ENCODE measurements at regions of chr7 and their contacts with region 1.

Region 1: DNA sequence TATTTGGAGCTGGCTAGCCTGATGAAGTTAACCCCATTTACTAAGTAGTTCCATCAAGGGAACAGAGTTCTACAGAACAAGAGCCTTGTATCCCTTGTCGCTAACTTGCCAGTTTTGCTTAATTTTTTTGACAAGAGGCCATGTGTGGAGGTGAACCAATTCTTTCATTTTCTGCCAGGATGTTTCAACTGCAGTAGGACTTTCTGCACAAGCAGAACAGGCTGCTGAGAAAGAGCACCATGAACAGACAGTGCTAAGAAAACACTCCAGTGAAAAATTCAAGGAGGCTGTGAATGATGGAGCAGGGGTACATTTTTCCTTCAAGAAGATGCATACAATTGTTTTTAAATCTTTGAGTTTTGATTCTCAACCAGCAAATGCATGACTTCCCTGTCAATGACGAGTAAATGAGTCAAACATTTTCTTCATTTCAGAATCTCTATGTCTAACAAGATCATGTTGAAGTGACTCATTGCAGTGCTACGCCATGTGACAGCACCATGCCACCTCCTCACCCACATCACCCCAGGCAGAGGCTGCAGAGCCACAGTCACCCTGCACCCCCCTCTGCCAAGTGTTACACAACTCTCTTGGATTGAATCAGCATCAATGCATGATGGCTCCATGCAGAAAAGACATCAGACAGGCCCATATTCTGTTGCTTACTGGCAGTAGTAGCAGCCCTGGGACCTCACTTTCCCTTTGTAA is 193.1 kb downstream of the COBL start:
- DNase-seq: peak; percentile 92
- ATAC-seq: peak; percentile 99
- H3K4me3 Mint-ChIP-seq: peak overlapping the region; percentile 10
- H3K27ac Mint-ChIP-seq: peak overlapping the region; percentile 88
- H3K4me1 Mint-ChIP-seq: peaks cover 40% of the 10 kb centered on the region
- H3K27me3 Mint-ChIP-seq: no peaks in the 10 kb centered on the region

Region 2: GRCh38 chr7:50147951-50148808 is 975.3 kb before region 1 on chr7:
- CTCF ChIA-PET with region 1: no interaction called
- POLR2A ChIA-PET with region 1: no interaction called
- intact Hi-C with region 1: loop called in 1 of 2 experiments (anchors 5 kb)
- DNase-seq: peak; percentile 65
- ATAC-seq: peak; percentile 89
- H3K4me3 Mint-ChIP-seq: peak overlapping the region; percentile 40
- H3K27ac Mint-ChIP-seq: peak overlapping the region; percentile 90
- H3K4me1 Mint-ChIP-seq: peaks cover 85% of the 10 kb centered on the region
- H3K27me3 Mint-ChIP-seq: no peaks in the 10 kb centered on the region

Region 3: DNA sequence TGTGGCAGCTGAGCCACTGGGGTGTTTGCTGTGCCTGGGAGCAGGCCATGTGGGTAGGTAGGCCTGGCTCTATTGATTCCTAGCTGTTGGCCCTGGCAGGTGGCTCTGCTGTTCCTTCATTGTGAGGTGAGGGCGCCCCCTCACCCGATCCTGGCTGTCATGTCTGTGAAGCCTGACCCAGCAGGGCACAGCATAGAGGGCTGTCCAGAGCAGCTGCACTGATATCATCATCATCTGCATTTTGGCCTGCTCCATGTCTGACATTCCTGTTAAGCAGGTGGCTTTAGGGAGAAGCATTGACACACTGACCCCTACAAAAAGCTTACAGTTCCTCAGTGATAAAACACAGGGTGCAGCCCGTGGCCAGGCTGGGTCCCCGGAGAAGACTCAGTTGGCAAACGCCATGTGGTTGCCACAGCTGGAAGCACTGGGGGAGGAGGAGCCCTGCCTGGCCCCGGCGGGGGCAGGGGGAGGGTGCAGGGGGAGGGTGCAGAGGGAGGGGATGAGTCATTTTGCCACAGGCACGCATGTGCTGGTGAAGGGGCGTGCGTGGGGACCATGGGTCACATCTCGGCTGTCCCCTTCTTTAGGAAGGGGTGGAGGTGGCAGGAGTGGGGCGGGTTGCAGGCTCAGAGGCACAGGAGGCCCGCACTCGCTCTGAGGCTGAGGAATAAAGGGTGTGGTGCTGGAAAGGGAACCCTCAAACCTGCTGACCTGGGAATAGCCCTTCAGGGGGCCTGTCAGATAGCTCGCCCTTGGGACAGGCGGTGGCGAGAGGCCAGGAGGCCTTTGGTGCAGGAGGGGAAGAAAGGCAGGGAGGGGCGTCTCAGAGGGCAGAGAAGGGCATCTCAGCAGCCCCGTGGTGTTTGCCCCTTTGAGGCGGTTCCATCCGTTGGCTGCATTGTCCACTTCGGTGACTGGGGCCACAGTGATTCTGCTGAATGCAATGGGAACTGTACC is 787.4 kb before region 1 on chr7:
- CTCF ChIA-PET with region 1: no interaction called
- POLR2A ChIA-PET with region 1: no interaction called
- intact Hi-C with region 1: loop called in 1 of 2 experiments (anchors 5 kb)
- DNase-seq: peak; percentile 93
- ATAC-seq: peak; percentile 34
- H3K4me3 Mint-ChIP-seq: no peak overlapping the region
- H3K27ac Mint-ChIP-seq: no peak overlapping the region
- H3K4me1 Mint-ChIP-seq: peaks cover 2% of the 10 kb centered on the region
- H3K27me3 Mint-ChIP-seq: no peaks in the 10 kb centered on the region

Region 4: DNA sequence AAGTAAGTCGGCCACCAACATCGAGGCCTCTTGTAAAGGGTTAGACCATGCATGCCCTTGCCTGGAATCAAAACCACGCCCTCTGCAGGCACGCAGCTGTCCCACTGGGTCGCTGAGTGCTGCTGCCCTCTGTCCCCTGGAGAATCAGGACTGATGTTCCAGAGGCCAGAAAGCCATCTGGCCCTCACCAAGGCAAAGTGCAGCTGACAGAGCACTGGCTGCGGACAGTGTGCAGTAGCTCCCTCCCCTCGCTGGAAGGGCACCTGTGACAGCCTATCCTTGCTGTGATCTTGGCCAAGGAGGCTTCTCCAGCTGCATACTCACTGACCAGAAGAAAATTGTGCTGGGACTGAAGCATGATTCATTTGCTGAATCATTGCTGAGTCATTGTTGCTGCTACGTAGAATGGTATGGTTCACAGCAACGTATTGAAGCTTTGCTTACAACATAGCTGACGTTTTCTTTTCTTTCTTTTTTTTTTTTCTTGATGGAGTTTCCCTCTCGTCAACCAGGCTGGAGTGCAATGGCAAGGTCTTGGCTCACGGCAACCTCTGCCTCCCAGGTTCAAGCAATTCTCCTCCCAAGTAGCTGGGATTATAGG is 588.7 kb before region 1 on chr7:
- CTCF ChIA-PET with region 1: no interaction called
- POLR2A ChIA-PET with region 1: no interaction called
- intact Hi-C with region 1: loop called in 1 of 2 experiments (anchors 5 kb)
- DNase-seq: peak; percentile 35
- ATAC-seq: peak; percentile 70
- H3K4me3 Mint-ChIP-seq: no peak overlapping the region
- H3K27ac Mint-ChIP-seq: no peak overlapping the region
- H3K4me1 Mint-ChIP-seq: peaks cover 27% of the 10 kb centered on the region
- H3K27me3 Mint-ChIP-seq: peaks cover 12% of the 10 kb centered on the region

Region 5: DNA sequence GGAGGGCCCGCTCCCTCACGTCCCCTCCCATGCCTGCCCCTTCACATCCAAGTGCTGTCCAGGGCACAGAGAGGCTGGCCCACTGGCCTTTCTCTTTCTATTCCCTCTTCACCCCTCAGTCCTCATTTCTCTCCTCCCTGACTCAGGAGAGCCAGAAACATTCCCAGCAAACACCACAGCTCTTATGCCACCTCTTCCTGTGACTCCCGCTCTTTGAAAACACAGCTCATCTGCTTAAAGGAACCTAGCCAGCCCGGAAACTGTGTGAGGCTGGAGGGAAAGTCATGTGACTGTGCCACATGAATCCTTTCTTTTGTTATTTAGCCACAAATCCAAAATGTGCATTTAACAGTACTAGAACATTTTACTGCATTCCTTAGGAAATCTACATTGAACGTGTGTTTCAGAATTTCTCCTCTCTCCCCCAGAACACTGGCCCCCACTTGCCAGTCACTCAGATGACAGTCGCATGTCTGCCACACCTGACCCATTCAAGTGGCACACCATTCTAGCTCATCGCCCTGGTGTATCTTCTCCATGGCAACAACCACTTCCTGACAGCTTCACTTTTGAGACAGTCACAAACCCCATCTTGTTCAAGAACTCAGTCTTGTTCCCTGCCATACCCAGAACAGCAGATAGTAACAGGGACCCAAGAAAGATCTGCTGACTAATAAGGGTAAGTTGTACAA is 383.6 kb before region 1 on chr7:
- CTCF ChIA-PET with region 1: no interaction called
- POLR2A ChIA-PET with region 1: no interaction called
- intact Hi-C with region 1: loop called in 1 of 2 experiments (anchors 5 kb)
- DNase-seq: peak; percentile 70
- ATAC-seq: peak; percentile 99
- H3K4me3 Mint-ChIP-seq: peak overlapping the region; percentile 32
- H3K27ac Mint-ChIP-seq: peak overlapping the region; percentile 85
- H3K4me1 Mint-ChIP-seq: peaks cover 23% of the 10 kb centered on the region
- H3K27me3 Mint-ChIP-seq: no peaks in the 10 kb centered on the region

Region 6: DNA sequence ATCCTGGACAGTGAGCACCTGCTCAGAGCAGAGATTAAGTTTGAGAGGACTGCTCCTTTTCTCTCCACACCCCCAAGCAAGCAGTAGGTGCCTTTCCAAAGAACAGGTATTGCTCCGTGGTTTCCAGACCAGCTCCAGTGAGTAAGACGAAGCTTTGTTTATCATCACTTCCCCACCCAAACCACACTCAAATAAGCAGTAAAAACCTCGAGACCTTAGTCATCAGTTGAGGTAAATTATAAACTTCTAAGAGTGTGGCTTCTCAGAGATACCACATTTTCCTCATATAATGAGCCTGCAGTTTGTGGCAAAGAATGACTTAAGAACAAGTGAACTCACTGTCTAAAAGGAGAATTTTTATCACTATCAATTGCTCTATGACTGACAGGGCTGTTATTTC is 290.7 kb before region 1 on chr7:
- CTCF ChIA-PET with region 1: no interaction called
- POLR2A ChIA-PET with region 1: no interaction called
- intact Hi-C with region 1: loop called (anchors 2 kb)
- DNase-seq: peak; percentile 54
- ATAC-seq: peak; percentile 94
- H3K4me3 Mint-ChIP-seq: no peak overlapping the region
- H3K27ac Mint-ChIP-seq: peak overlapping the region; percentile 7
- H3K4me1 Mint-ChIP-seq: peaks cover 18% of the 10 kb centered on the region
- H3K27me3 Mint-ChIP-seq: peaks cover 34% of the 10 kb centered on the region

Measured in activated CD4-positive, alpha-beta T cell treated with anti-CD3 and anti-CD28 coated beads for 36 hours (primary cell).